CD4-positive, alpha-beta memory T cell (primary cell): ENCODE measurements at regions of chr6 and their contacts with region 1.

Region 1: DNA sequence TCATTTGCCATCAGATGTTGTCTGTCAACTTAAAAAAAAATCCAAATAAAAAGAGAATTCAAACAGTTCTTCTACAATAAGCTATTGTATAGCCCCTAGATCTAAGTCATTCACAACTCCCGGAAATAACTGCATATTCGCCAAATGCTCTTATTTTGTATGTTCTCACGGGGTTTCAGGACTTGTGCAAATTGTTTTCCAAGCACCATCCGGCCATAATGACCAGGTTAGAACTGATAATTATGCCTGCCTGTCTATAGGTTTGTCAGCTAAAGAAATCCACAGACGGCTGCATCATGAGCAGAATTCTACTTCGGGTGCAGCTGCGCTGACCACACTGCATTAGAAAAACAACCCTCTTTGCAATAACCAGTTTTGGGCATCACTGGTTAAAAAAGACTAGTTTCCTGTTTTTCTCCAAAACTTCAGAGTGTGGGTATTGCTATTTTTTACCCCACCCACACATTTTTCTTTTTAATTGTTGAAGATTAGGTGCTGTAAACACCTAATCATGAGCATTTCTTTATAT is 87.7 kb downstream of the HIVEP2 start:
- DNase-seq: peak; percentile 55 to 66 (median 61)
- H3K4me3 ChIP-seq: peak overlapping the region; percentile 32 to 51
- H3K4me3 Mint-ChIP-seq: peak overlapping the region; percentile 81 to 94 (median 86)
- H3K27ac ChIP-seq: peak overlapping the region; percentile 81
- H3K27ac Mint-ChIP-seq: peak overlapping the region; percentile 91 to 98 (median 95)
- H3K4me1 ChIP-seq: peaks cover 96% of the 10 kb centered on the region
- H3K4me1 Mint-ChIP-seq: peaks cover 75 to 95% (median 86%) of the 10 kb centered on the region in 4 donors
- H3K27me3 ChIP-seq: no peaks in the 10 kb centered on the region
- H3K27me3 Mint-ChIP-seq: no peaks in the 10 kb centered on the region

Region 2: DNA sequence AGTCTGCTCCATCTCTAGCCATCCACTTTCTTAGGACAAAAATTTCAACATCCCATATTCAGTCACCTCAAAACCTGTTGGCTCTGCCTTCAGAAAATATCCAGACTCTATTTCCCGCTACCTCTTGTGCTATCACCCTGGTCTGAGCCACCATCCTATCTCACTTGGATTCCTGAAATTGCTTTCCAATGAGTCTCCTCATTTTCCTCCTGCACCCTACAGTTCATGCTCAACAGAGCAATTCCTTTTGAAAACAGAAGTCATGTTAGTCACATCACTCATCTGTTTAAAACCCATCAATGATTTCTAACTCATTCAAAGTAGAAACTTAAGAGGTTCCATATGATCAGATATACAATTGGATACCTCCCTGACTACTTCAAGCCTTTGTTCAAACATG is 325.6 kb before region 1 on chr6:
- CTCF ChIA-PET with region 1: no interaction called
- POLR2A ChIA-PET with region 1: no interaction called
- intact Hi-C with region 1: no loop called
- DNase-seq: no peak
- H3K4me3 ChIP-seq: no peak overlapping the region
- H3K4me3 Mint-ChIP-seq: no peak overlapping the region
- H3K27ac ChIP-seq: no peak overlapping the region
- H3K27ac Mint-ChIP-seq: no peak overlapping the region
- H3K4me1 ChIP-seq: no peaks in the 10 kb centered on the region
- H3K4me1 Mint-ChIP-seq: no peaks in the 10 kb centered on the region
- H3K27me3 ChIP-seq: no peaks in the 10 kb centered on the region
- H3K27me3 Mint-ChIP-seq: peaks cover 2 to 3% of the 10 kb centered on the region in 2 donors

Region 3: GRCh38 chr6:142871910-142872331 is 14.6 kb after region 1 on chr6:
- CTCF ChIA-PET with region 1: interaction called, 6 read pairs
- POLR2A ChIA-PET with region 1: interaction called, 53 read pairs
- intact Hi-C with region 1: loop called (anchors 1 kb)
- DNase-seq: peak; percentile 64 to 88 (median 71)
- H3K4me3 ChIP-seq: no peak overlapping the region
- H3K4me3 Mint-ChIP-seq: peak overlapping the region; percentile 45 to 77 (median 65)
- H3K27ac ChIP-seq: peak overlapping the region; percentile 65
- H3K27ac Mint-ChIP-seq: peak overlapping the region; percentile 76 to 98 (median 95)
- H3K4me1 ChIP-seq: peaks cover 94% of the 10 kb centered on the region
- H3K4me1 Mint-ChIP-seq: peaks cover 74 to 95% (median 82%) of the 10 kb centered on the region in 4 donors
- H3K27me3 ChIP-seq: no peaks in the 10 kb centered on the region
- H3K27me3 Mint-ChIP-seq: no peaks in the 10 kb centered on the region

Region 4: GRCh38 chr6:142913511-142914047 is 56.3 kb after region 1 on chr6:
- CTCF ChIA-PET with region 1: interaction called, 4 read pairs
- POLR2A ChIA-PET with region 1: interaction called, 7 read pairs
- intact Hi-C with region 1: loop called (anchors 2 kb)
- DNase-seq: peak; percentile 78 to 88 (median 81)
- H3K4me3 ChIP-seq: peak overlapping the region; percentile 14 to 57
- H3K4me3 Mint-ChIP-seq: peak overlapping the region; percentile 84 to 95 (median 88)
- H3K27ac ChIP-seq: peak overlapping the region; percentile 85
- H3K27ac Mint-ChIP-seq: peak overlapping the region in 6 of 7 donors; percentile 98 to 100 (median 99)
- H3K4me1 ChIP-seq: peaks cover 97% of the 10 kb centered on the region
- H3K4me1 Mint-ChIP-seq: peaks cover 71 to 86% (median 80%) of the 10 kb centered on the region in 4 donors
- H3K27me3 ChIP-seq: no peaks in the 10 kb centered on the region
- H3K27me3 Mint-ChIP-seq: no peaks in the 10 kb centered on the region